Activated CD4-positive, alpha-beta T cell treated with anti-CD3 and anti-CD28 coated beads, Interleukin-2, amount 10 ng/mL, durations not matched to agents 24 days and 14 days (primary cell): ENCODE measurements at regions of chr10 and their contacts with region 1.

Region 1: GRCh38 chr10:31101123-31101522 is 69.5 kb upstream of the ZNF438 start:
- DNase-seq: peak; percentile 89
- H3K4me3 Mint-ChIP-seq: peak overlapping the region; percentile 76
- H3K27ac Mint-ChIP-seq: peak overlapping the region; percentile 93
- H3K4me1 Mint-ChIP-seq: peaks cover 60% of the 10 kb centered on the region
- H3K27me3 Mint-ChIP-seq: no peaks in the 10 kb centered on the region

Region 2: DNA sequence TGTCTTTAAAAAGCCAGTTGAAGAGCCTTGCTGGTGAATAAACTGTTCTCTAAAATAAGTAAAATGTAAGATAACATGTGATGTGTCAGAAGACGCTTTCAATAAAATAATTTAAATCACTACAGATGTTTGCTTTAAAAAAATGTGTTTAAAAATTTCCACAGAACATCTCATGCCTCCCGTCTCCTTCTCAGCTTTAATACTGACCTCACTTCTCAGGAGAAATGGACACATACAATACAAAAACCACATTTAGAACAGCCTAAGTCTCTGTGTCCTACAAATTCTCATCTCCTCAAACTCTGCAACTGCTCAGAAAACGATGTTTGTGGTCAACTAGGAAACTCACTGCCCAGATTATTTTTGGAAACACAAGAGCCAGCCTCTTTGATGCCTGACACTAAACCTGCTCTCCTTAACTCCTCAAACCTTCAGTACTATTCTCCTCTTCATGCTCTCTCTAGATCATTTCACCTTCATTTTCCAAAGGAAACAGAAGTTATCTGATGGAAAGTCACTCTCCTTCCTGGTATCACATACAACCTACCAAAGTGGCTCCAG is 189.7 kb before region 1 on chr10:
- intact Hi-C with region 1: no loop called
- DNase-seq: no peak
- H3K4me3 Mint-ChIP-seq: no peak overlapping the region
- H3K27ac Mint-ChIP-seq: no peak overlapping the region
- H3K4me1 Mint-ChIP-seq: no peaks in the 10 kb centered on the region
- H3K27me3 Mint-ChIP-seq: no peaks in the 10 kb centered on the region

Region 3: GRCh38 chr10:30999070-30999712 is 101.9 kb before region 1 on chr10:
- intact Hi-C with region 1: loop called (anchors 5 kb)
- DNase-seq: peak; percentile 61
- H3K4me3 Mint-ChIP-seq: peak overlapping the region; percentile 75
- H3K27ac Mint-ChIP-seq: peak overlapping the region; percentile 94
- H3K4me1 Mint-ChIP-seq: peaks cover 40% of the 10 kb centered on the region
- H3K27me3 Mint-ChIP-seq: no peaks in the 10 kb centered on the region

Region 4: DNA sequence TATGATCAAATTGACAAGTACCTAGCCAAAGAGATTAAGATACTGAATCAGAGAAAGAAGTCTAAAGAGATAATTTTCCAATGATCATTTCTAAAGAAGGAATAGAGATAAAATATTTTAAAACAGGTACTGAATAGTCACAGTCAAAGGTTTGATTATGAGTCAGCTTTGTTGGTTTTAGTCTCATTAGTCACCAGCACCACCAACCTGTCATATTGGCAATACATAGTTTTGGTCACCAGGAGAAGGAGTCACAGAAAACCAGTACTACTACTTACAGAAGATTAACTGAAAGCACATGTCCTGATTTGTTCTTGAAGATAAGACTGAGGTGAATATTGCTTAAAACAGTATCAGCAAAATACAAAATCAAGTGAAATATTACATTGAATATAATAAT is 252.5 kb after region 1 on chr10:
- intact Hi-C with region 1: loop called (anchors 2 kb)
- DNase-seq: peak; percentile 67
- H3K4me3 Mint-ChIP-seq: peak overlapping the region; percentile 25
- H3K27ac Mint-ChIP-seq: peak overlapping the region; percentile 80
- H3K4me1 Mint-ChIP-seq: peaks cover 39% of the 10 kb centered on the region
- H3K27me3 Mint-ChIP-seq: no peaks in the 10 kb centered on the region

Region 5: GRCh38 chr10:31630861-31631567 is 529.9 kb after region 1 on chr10:
- intact Hi-C with region 1: no loop called
- DNase-seq: no peak
- H3K4me3 Mint-ChIP-seq: no peak overlapping the region
- H3K27ac Mint-ChIP-seq: no peak overlapping the region
- H3K4me1 Mint-ChIP-seq: no peaks in the 10 kb centered on the region
- H3K27me3 Mint-ChIP-seq: peaks cover 9% of the 10 kb centered on the region